ENCODE measurements at regions of chr1 and their contacts with region 1.

Region 1: GRCh38 chr1:222654849-222655248 is 37.0 kb downstream of the MIA3 start:
- DNase-seq: peak; percentile 53 to 95 (median 71)
- ATAC-seq: peak; percentile 98
- H3K4me3 ChIP-seq: no peak overlapping the region
- H3K4me3 Mint-ChIP-seq: peak overlapping the region; percentile 54
- H3K27ac ChIP-seq: peak overlapping the region; percentile 70 to 89
- H3K27ac Mint-ChIP-seq: peak overlapping the region; percentile 96
- H3K4me1 ChIP-seq: peaks cover 43% of the 10 kb centered on the region
- H3K4me1 Mint-ChIP-seq: peaks cover 61% of the 10 kb centered on the region
- H3K27me3 ChIP-seq: no peaks in the 10 kb centered on the region
- H3K27me3 Mint-ChIP-seq: no peaks in the 10 kb centered on the region
- CTCF ChIP-seq: peak; percentile 40

Region 2: GRCh38 chr1:223142795-223143536 is 488.1 kb after region 1 on chr1 and contains the start of gene TLR5:
- CTCF ChIA-PET with region 1: no interaction called
- POLR2A ChIA-PET with region 1: no interaction called
- intact Hi-C with region 1: loop called in 1 of 2 experiments (anchors 10 kb)
- DNase-seq: peak; percentile 75 to 94 (median 90)
- ATAC-seq: peak; percentile 91
- H3K4me3 ChIP-seq: peak within 1 kb of the TSS; percentile 54
- H3K4me3 Mint-ChIP-seq: peak within 1 kb of the TSS; percentile 73
- H3K27ac ChIP-seq: peak within 1 kb of the TSS; percentile 21 to 25
- H3K27ac Mint-ChIP-seq: peak within 1 kb of the TSS; percentile 52
- H3K4me1 ChIP-seq: peaks cover 16% of the 10 kb centered on the region
- H3K4me1 Mint-ChIP-seq: peaks cover 21% of the 10 kb centered on the region
- H3K27me3 ChIP-seq: no peaks in the 10 kb centered on the region
- H3K27me3 Mint-ChIP-seq: no peaks in the 10 kb centered on the region
- CTCF ChIP-seq: peak; percentile 28
- total RNA-seq, gene TLR5: 1.1 to 1.2 TPM

Region 3: DNA sequence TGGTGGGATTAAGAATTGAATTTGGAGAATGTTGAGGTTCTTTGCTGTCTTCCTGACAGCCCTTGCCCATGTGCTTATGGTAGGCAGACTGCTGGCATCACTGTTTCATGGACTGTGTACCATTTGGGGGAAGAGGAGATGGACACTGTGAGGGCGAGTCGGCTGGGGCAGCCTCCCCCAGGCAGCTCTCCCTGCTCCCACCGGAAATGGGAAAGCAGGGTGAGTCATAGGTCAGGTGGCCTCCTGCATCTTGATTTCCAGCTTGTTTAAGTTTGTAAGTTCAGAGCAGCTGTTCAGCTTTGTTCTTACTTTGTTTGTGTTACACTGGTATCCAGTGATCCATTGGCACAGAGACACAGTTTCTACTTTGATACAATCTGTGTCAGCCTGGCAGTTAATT is 1874.1 kb after region 1 on chr1:
- CTCF ChIA-PET with region 1: no interaction called
- POLR2A ChIA-PET with region 1: no interaction called
- intact Hi-C with region 1: no loop called
- DNase-seq: no peak
- ATAC-seq: no peak
- H3K4me3 ChIP-seq: no peak overlapping the region
- H3K4me3 Mint-ChIP-seq: no peak overlapping the region
- H3K27ac ChIP-seq: no peak overlapping the region
- H3K27ac Mint-ChIP-seq: no peak overlapping the region
- H3K4me1 ChIP-seq: no peaks in the 10 kb centered on the region
- H3K4me1 Mint-ChIP-seq: no peaks in the 10 kb centered on the region
- H3K27me3 ChIP-seq: no peaks in the 10 kb centered on the region
- H3K27me3 Mint-ChIP-seq: peaks cover 3% of the 10 kb centered on the region
- CTCF ChIP-seq: no peak